ENCODE measurements at regions of chr12 and their contacts with region 1.

Region 1: DNA sequence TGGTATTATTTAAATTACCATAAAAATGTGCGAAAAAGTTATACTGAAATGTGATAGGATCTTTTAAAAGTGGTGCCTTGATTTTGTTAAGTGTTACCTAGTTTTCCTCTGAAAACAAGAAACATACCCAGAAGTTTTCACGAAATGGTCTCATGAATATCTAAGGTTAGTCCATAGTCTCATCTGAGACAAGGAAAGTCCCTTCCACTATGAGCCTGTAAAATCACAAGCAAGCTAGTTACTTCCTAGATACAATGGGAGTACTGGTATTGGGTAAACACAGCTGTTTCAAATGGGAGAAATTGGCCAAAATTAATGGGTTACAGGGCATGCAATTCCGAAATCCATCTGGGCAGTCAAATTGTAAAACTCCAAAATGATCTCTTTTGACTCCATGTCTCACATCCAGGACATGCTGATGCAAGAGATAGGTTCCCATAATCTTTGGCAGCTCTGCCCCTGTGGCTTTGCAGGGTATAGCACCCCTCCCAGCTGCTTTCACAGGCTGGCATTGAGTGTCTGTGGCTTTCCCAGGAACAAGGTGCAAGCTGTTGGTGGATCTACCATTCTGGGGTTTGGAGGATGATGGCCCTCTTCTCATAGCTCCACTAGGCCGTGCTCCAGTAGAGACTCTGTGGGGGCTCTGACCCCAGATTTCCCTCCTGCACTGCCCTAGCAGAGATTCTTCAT is 271.4 kb downstream of the NAV3 start:
- DNase-seq: no peak

Region 2: DNA sequence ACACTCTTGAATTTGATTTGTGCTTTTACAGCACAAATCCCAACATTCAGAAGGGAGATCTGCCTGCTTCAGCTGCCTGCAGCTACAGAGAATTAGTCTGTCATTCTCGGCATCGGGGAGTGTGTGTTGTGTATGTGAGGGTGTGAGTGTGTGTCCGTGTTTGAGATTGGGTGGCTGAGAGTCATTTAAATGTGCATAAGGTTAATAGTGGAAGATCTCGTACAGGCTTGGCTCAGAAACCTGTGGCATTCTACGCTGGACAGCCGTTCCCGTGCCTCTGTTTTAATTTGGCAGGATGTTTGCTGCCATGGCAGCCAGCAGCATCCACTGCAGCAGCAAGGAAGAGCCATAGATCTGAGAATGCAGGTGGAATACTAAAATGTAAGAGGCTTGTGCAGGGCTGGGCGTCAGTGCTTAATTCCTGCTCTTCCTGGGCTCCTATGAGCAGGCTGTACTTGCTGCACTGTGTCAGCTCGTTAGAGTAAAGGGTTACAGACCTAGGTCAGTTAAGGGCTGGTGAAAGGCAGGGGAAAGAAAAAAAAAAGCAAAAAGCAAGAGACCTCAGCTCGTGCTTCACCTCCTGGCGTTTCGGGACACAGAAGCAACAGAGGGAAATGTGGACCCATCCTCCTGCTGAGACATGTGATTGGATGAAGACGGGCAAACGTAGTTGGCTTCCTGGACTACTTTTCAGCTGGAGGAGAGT is 66.0 kb before region 1 on chr12:
- intact Hi-C with region 1: loop called in 1 of 2 experiments (anchors 5 kb)
- DNase-seq: no peak

Region 3: GRCh38 chr12:78167510-78167909 is 65.4 kb after region 1 on chr12:
- intact Hi-C with region 1: no loop called
- DNase-seq: no peak